Right cardiac atrium (tissue), 5 donors: ENCODE measurements at regions of chr15 and their contacts with region 1.

Region 1: GRCh38 chr15:60362321-60363086 is 35.3 kb downstream of the ANXA2 start:
- DNase-seq: no peak
- ATAC-seq: peak; percentile 22 to 75
- H3K4me3 ChIP-seq: no peak overlapping the region
- H3K27ac ChIP-seq: peak overlapping the region; percentile 67
- H3K4me1 ChIP-seq: peaks cover 7% of the 10 kb centered on the region
- H3K27me3 ChIP-seq: no peaks in the 10 kb centered on the region

Region 2: DNA sequence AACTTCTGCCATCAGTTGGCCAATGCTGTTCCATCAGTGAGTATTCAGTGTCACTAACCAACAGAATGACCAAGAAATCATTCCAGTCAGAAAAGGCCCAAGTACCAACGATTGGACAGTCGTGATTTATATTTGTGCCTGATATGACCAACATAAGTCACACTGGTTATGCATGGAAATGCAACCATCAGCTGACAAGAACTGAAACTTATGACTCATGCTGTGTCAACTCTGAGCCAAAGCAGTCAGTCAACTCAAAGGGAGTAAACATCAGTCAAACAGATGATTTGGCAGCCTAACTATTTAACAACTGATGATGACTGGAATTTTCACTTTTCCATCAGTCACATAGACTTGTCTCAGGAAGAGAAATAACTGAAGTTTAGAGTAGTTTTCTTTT is 107.1 kb before region 1 on chr15:
- intact Hi-C with region 1: no loop called
- DNase-seq: no peak
- ATAC-seq: no peak
- H3K4me3 ChIP-seq: no peak overlapping the region
- H3K27ac ChIP-seq: no peak overlapping the region
- H3K4me1 ChIP-seq: no peaks in the 10 kb centered on the region
- H3K27me3 ChIP-seq: no peaks in the 10 kb centered on the region

Region 3: DNA sequence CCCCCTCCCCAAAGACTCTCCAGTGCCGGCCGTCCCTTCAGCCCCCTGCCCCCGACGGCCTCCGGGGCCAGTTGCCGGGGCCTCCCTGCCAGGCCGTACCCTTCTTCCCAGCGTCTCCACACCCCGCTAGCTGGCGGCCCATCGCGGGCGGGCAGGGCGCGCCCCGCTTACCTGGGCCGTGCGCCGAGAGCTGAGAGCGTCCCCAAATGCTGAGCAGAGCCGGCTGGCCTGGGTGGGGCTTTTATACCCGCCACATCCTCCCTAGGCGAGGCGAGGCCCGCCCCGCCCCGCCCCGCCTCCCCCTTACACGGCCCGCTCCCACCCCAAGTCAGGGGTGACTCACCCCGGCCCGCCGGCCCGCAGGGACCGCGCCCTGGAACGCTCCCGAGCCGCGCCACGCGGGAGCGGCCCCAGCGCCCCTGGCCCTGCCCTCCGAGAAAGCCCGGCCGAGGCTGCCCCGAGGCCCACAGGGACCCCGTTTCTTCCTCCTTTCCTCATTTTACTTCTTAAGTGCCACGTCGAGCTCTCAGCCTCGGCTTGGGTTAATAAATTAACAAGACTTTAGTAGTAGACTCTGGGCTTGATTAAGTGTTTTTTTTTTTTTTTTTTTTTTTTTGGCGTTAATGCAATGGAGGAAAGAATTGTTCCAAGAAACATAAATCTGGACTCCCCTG is 35.4 kb after region 1 on chr15 and contains the start of gene ANXA2:
- intact Hi-C with region 1: loop called in 1 of 4 experiments (anchors 5 kb)
- DNase-seq: peak; percentile 92 to 95 (median 95)
- ATAC-seq: peak; percentile 90
- H3K4me3 ChIP-seq: peak within 1 kb of the TSS; percentile 90
- H3K27ac ChIP-seq: peak within 1 kb of the TSS; percentile 96
- H3K4me1 ChIP-seq: peaks cover 13% of the 10 kb centered on the region
- H3K27me3 ChIP-seq: no peaks in the 10 kb centered on the region
- total RNA-seq, gene ANXA2: 126 to 293 (median 224) TPM

Region 4: DNA sequence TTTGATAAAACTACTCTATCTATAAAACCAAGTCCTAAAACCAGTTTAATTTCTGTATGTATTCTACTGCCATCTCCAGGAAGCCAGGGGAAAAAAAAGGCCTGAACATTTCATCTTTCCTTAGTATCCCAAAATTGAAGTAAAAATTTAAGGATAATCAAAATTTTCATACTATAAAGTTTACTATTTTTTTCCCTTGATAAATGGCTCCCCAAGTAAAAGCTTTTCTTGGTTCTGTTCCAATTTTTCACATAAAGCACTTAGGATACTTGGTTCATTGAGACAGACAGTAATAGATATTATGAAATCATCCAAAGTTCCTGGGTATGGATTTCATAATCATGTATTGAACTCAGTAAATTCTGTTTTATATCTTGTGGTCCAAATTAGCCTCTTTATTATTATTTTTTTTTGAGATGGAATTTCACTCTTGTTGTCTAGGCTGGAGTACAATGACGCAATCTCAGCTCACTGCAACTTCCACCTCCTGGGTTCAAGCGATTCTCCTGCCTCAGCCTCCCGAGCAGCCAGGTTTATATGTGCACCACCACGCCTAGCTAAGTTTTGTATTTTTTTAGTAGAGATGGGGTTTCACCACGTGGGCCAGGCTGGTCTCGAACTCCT is 81.9 kb after region 1 on chr15:
- intact Hi-C with region 1: loop called (anchors 5 to 10 kb)
- DNase-seq: no peak
- ATAC-seq: no peak
- H3K4me3 ChIP-seq: no peak overlapping the region
- H3K27ac ChIP-seq: no peak overlapping the region
- H3K4me1 ChIP-seq: no peaks in the 10 kb centered on the region
- H3K27me3 ChIP-seq: no peaks in the 10 kb centered on the region